RWPE1 (cell line): ENCODE measurements at regions of chr2 and their contacts with region 1.

Region 1: GRCh38 chr2:232333361-232334270 is 44.9 kb upstream of the ALPP start:
- DNase-seq: peak; percentile 72
- H3K27ac ChIP-seq: peak overlapping the region; percentile 39
- CTCF ChIP-seq: peak; percentile 71

Region 2: DNA sequence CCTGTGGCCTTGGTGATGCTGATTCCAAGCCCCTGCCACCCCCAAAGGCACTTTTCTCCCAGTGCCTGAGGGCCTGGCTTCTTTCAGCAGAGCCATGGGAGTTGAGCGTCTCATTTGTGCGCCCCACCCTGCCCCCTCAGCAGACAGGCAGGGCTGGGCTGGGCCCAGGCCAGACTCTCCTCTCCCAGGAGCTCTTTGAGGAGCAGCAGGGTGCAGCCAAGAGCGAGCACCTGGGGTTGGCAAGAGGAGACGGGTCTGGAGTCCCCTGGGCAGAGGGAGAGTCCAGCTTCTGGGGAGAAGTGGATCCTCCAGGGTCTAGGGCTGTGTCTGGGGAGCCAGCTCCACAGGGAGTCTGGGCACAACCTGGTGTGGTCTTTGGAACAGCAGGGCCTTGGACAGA is 428.6 kb before region 1 on chr2:
- CTCF ChIA-PET with region 1: interaction called, 19 read pairs
- POLR2A ChIA-PET with region 1: no interaction called
- DNase-seq: no peak
- H3K27ac ChIP-seq: no peak overlapping the region
- CTCF ChIP-seq: no peak

Region 3: DNA sequence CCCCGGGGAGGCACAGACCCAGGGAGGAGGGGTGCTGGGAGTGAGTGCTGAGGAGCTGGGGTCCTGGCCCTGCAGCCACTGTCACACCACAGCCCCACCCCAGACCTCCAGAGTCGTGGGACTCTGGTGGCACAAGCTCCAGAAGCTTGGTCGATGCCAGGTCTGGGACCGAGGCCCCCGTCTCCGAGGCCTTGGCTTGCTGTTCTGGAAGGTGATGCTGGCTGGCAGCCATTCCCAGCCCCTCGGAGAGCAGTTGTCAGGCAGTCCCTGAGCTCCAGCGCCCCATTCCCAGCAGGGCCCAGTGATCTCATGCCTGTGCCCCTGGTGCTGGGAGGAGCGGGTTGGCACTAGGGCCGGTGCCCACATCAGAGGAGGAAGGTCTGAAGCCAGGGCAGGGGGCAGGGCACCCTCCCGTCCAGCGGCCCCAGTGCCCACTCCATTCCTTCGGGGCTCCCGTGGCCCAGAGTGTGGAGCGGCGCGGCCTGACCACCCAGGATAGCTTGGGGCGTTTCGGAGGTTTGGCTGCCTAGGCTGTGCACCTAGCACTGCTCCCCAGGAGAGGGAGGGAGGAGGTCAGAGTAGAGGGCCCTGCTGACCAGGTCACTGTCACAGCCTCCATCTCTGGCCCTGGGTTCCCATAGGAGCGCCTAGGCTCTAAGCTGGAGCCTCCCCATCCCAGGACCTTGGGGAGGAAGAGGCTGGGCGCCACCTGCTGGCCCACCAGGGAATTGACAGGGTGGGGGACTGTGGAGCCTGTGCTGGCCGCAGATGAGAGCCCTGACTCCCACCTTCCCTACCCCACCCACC is 105.5 kb after region 1 on chr2:
- CTCF ChIA-PET with region 1: interaction called, 27 read pairs
- POLR2A ChIA-PET with region 1: no interaction called
- DNase-seq: no peak
- H3K27ac ChIP-seq: no peak overlapping the region
- CTCF ChIP-seq: peak; percentile 74